ENCODE measurements at regions of chr12 and their contacts with region 1.

Region 1: DNA sequence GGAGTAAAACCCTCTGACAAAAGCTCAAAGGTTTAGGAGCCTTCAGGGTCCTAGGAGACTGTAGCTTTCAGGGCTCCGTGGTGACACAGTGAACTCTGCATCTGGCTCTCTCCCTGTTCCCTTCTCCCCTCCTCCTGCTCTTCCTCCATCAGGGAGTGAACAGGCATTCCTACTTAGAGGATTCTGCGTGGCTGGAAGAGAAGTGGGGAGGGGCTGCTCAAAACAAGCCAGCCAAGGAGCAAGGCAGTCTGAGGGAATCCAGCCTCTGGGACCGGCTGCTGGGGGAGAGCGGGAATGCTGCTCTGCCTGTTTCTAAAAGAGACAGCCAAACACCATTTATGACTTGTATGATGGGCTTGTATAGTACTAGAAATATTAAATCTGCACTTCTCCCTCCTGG is 49.5 kb downstream of the RBMS2 start:
- DNase-seq: no peak
- H3K4me3 ChIP-seq: no peak overlapping the region
- H3K27ac ChIP-seq: no peak overlapping the region
- H3K4me1 ChIP-seq: peaks cover 0 to 10% (median 8%) of the 10 kb centered on the region in 4 donors
- H3K27me3 ChIP-seq: no peaks in the 10 kb centered on the region
- CTCF ChIP-seq: no peak

Region 2: DNA sequence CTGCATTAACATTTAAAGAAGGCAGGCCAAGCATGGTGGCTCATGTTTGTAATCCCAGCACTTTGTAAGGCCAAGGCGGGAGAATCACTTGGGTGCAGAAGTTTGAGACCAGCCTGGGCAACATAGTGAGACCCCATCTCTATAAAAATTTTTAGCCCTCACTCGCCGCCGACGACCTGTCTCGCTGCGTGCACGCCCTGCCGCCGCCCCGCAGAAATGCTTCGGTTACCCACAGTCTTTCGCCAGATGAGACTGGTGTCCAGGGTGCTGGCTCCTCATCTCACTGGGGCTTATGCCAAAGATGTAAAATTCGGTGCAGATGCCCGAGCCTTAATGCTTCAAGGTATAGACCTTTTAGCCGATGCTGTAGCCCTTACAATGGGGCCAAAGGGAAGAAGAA is 60.3 kb before region 1 on chr12:
- intact Hi-C with region 1: loop called (anchors 5 kb)
- DNase-seq: no peak
- H3K4me3 ChIP-seq: no peak overlapping the region
- H3K27ac ChIP-seq: no peak overlapping the region
- H3K4me1 ChIP-seq: peaks cover 0 to 4% (median 2%) of the 10 kb centered on the region in 4 donors
- H3K27me3 ChIP-seq: no peaks in the 10 kb centered on the region
- CTCF ChIP-seq: no peak

Region 3: DNA sequence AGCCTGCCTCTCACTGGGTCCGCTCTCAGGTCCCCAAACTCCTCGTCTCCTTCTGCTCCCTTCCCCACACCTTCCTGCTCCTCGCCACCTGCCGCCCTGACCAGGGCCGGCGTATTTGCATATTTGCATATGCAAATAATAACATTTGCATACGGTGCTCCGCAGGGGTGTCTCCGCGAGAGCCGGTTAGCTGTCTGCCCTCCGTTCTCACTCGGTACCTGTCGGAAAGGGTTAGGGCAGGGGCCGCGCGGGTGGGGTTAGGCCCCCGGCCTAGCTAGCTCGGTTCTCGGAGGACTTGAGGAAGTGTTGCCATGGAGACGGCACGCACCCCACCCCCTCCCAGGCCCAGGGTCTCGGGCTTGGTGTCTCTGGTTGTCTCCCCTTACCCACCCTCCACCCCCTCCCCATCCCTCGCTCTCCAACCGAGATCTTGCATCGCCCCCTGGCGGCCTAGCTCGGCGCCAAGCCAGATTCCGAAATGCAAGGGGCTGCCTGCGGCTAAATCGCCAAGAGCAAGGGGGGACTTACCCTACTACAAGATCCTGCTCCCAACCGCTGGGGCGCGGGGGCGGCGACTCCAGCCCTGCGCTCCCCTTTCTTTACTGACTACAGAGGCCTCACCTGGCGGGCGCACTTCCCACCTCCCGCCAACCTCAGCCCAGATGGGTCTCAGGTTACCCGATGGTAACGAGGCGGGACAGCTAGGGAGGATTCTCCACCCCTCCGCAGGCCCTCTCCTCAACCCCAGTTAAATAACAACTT is 671.7 kb after region 1 on chr12:
- intact Hi-C with region 1: no loop called
- DNase-seq: peak in 1 of 2 donors; percentile 75
- H3K4me3 ChIP-seq: peak overlapping the region in 1 of 2 donors; percentile 33
- H3K27ac ChIP-seq: no peak overlapping the region
- H3K4me1 ChIP-seq: peaks cover 11 to 63% (median 55%) of the 10 kb centered on the region in 4 donors
- H3K27me3 ChIP-seq: peaks cover 7 to 54% of the 10 kb centered on the region in 2 donors
- CTCF ChIP-seq: peak; percentile 34 to 49

Measured in tibial artery (tissue), 4 donors.